ENCODE measurements at regions of chr2 and their contacts with region 1.

Region 1: DNA sequence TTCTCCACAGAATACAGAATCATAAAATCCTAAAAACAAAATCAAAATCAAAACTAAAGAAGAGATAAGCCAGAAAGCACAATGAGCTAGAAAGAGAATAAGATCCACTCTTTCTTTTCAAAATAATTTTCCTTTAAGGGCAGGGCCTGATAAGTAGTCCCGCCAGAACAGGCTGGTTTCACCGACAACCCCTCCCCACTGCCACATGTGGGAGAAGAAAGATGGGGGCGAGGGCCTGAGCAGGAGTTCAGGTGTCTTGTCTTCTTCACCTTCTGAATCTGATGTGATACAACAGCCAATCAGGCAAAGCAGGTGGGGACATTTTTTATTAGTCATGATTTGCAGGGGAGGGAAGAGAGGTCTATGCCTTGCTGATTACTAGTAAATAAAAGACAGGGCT is 61.6 kb upstream of the ASPRV1 start:
- DNase-seq: no peak
- ATAC-seq: no peak
- H3K4me3 Mint-ChIP-seq: no peak overlapping the region
- H3K27ac Mint-ChIP-seq: no peak overlapping the region
- H3K4me1 Mint-ChIP-seq: peaks cover 6% of the 10 kb centered on the region
- H3K27me3 Mint-ChIP-seq: no peaks in the 10 kb centered on the region

Region 2: DNA sequence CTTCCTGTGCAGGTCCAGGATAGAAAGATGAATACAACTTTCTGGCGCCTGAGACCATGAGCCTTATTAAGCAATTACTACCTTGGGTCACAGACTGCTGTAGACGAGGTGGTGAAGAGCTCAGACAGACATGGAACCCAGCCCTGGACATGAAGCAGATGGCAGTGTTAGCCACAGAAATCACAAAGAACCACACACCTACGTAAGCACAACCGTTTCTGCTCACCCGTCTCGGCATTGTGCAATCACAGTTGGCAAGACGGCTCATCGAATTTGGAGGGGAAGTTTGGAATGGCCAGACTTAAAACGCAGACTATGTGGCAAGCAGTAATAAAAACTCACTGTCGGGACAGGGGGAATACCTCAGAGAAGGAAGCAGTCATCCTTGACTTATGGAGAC is 37.3 kb before region 1 on chr2:
- CTCF ChIA-PET with region 1: no interaction called
- POLR2A ChIA-PET with region 1: interaction called, 12 read pairs
- intact Hi-C with region 1: no loop called
- DNase-seq: no peak
- ATAC-seq: no peak
- H3K4me3 Mint-ChIP-seq: no peak overlapping the region
- H3K27ac Mint-ChIP-seq: no peak overlapping the region
- H3K4me1 Mint-ChIP-seq: peaks cover 3% of the 10 kb centered on the region
- H3K27me3 Mint-ChIP-seq: no peaks in the 10 kb centered on the region